HCT116 (cell line): ENCODE measurements at regions of chr12 and their contacts with region 1.

Region 1: DNA sequence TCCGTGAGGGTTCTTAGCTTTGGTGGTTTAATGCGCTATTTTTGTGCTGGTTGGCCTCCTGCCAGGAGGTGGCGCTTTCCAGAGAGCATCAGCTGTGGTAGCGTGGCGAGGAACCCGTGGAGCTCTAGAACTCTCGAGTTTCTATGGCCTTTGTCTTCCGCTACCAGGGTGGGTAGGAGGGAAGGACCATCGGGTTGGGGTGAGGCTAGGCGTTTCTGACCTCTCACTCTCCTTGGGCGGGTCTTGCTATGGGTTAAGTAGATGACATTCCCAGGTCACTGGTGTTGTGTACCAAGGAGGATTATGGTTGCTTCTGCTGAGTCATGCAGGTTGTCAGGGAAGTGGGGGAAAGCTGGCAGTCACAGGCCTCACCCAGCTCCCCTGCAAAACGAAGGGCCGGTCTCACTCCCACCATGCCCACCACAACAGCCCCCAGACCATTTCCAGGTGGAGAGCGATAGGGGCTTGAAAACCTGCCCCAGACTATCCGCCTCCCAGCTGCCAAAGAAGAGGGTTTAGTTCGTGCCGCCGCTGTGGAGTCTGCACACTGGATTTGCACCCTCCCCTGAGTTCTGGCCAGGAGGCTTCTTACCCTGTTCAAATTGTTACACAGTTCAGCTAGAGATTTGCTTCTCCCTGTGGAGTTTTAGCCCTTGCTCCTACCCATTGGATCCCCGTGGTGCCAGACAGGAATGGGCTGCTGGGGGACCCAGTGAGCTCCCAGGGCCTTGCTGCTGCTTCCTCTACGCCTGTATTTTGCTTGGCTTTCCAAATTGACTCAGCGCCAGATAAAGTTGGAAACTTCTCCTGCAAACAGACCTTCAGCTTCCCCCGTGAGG is 21.9 kb downstream of the RNFT2 start:
- DNase-seq: peak; percentile 53
- ATAC-seq: peak; percentile 85
- H3K4me3 ChIP-seq: peak overlapping the region; percentile 75 to 76
- H3K27ac ChIP-seq: peak overlapping the region; percentile 67
- H3K4me1 ChIP-seq: peaks cover 5 to 16% of the 10 kb centered on the region in 2 experiments; a peak in 2 of 4 replicates
- H3K27me3 ChIP-seq: no peaks in the 10 kb centered on the region
- CTCF ChIP-seq: peak; percentile 16 to 43 (median 18); a peak in 2 of 6 replicates
- POLR2A ChIP-seq: no peak
- RAD21 ChIP-seq: no peak

Region 2: DNA sequence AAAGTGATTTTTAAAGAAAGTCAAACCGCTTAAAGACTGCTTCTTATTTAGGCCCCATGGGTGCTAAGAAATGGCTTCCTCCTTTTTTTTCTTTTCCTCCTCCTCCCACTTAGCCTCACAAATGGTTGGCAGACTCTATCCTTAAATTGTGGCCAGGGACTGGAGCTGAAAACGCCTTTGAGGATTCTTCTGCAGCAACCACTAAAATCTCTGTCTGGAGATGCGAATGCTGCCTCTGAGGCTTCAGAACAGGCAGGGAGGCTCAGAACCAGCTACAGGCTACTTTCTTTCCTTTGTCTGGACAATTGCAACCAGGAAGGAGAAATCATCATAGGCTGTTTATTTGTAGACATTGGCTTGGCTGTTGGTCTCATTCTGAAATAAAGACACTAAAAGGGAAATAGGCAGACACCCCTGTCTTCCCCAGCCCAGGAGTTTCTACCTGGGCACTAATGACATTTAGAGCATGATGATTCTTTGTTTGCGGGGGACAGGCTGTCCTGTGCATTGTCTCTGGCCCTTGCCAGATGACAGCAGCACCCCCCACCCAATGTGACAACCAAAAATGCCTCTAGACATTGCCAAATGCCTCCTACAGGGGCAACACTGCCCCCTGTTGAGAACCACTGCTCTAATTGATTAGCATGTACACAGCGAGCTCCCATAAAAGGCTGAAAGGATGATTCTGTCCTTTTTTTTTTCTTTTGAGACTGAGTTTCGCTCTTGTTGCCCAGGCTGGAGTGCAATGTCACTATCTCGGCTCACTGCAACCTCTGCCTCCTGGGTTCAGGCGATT is 150.5 kb before region 1 on chr12:
- CTCF ChIA-PET with region 1: no interaction called
- POLR2A ChIA-PET with region 1: no interaction called
- RAD21 ChIA-PET with region 1: no interaction called
- intact Hi-C with region 1: no loop called
- DNase-seq: no peak
- ATAC-seq: peak; percentile 73
- H3K4me3 ChIP-seq: no peak overlapping the region
- H3K27ac ChIP-seq: no peak overlapping the region
- H3K4me1 ChIP-seq: peaks cover 15 to 33% of the 10 kb centered on the region in 2 experiments
- H3K27me3 ChIP-seq: no peaks in the 10 kb centered on the region
- CTCF ChIP-seq: peak; percentile 42 to 61 (median 61); a peak in 5 of 6 replicates
- POLR2A ChIP-seq: no peak
- RAD21 ChIP-seq: peak; percentile 68

Region 3: GRCh38 chr12:116863275-116863767 is 103.3 kb after region 1 on chr12:
- CTCF ChIA-PET with region 1: interaction called, 11 read pairs
- POLR2A ChIA-PET with region 1: no interaction called
- RAD21 ChIA-PET with region 1: no interaction called
- intact Hi-C with region 1: no loop called
- DNase-seq: peak; percentile 54
- ATAC-seq: peak; percentile 93
- H3K4me3 ChIP-seq: no peak overlapping the region
- H3K27ac ChIP-seq: no peak overlapping the region
- H3K4me1 ChIP-seq: peaks cover 13 to 22% of the 10 kb centered on the region in 2 experiments
- H3K27me3 ChIP-seq: no peaks in the 10 kb centered on the region
- CTCF ChIP-seq: peak; percentile 78 to 95 (median 93)
- POLR2A ChIP-seq: no peak
- RAD21 ChIP-seq: peak; percentile 60

Region 4: DNA sequence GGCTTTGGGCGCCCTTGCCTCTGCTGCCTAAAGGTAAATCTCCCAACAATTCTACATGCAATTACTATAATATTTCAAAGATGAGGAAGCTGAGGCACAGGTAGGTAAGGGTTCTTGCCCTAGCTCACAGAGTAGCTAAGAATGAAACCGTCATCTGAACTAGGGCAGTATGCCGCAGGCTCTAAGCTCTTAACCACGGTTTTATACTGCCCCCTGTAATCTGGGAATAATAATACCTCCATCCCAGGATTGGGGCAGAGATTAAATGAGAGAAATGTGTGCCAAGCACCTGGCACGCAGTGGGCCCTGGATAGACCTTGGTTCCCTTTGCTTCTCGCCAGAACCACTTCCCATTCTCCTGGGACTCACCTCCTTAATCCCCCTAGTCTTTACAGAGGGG is 122.7 kb after region 1 on chr12:
- CTCF ChIA-PET with region 1: interaction called, 16 read pairs
- POLR2A ChIA-PET with region 1: no interaction called
- RAD21 ChIA-PET with region 1: no interaction called
- intact Hi-C with region 1: no loop called
- DNase-seq: no peak
- ATAC-seq: no peak
- H3K4me3 ChIP-seq: no peak overlapping the region
- H3K27ac ChIP-seq: no peak overlapping the region
- H3K4me1 ChIP-seq: peaks cover 14 to 32% of the 10 kb centered on the region in 2 experiments; a peak in 3 of 4 replicates
- H3K27me3 ChIP-seq: no peaks in the 10 kb centered on the region
- CTCF ChIP-seq: peak in 2 of 3 experiments; percentile 43 to 74; a peak in 4 of 6 replicates
- POLR2A ChIP-seq: no peak
- RAD21 ChIP-seq: peak; percentile 83

Region 5: DNA sequence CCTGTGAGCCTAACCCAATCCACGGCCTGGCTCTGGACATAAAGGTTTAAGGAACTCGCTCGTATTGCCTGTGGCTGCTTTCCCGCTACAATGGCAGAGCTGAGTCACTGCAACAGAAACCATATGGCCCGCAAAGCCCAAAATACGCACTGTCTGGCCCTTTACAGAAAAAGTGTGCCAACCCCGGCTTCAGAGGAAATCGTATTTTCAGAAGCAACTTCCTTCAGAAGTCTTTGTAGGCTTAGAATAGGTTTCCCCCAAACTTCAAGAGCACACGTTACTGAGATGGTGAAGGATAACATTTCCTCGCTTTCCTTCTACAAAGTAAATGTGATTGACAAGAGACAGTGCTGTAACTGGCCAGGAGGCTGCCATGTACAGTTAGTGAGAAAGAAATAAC is 374.1 kb after region 1 on chr12:
- CTCF ChIA-PET with region 1: no interaction called
- POLR2A ChIA-PET with region 1: no interaction called
- RAD21 ChIA-PET with region 1: no interaction called
- intact Hi-C with region 1: no loop called
- DNase-seq: no peak
- ATAC-seq: no peak
- H3K4me3 ChIP-seq: no peak overlapping the region
- H3K27ac ChIP-seq: no peak overlapping the region
- H3K4me1 ChIP-seq: no peaks in the 10 kb centered on the region
- H3K27me3 ChIP-seq: no peaks in the 10 kb centered on the region
- CTCF ChIP-seq: no peak
- POLR2A ChIP-seq: no peak
- RAD21 ChIP-seq: no peak